ENCODE measurements at regions of chr3 and their contacts with region 1.

Region 1: GRCh38 chr3:172580680-172581401 is 57.6 kb upstream of the TNFSF10 start:
- DNase-seq: no peak
- ATAC-seq: no peak
- H3K4me3 Mint-ChIP-seq: no peak overlapping the region
- H3K27ac Mint-ChIP-seq: peak overlapping the region; percentile 14
- H3K4me1 Mint-ChIP-seq: peaks cover 26% of the 10 kb centered on the region
- H3K27me3 Mint-ChIP-seq: no peaks in the 10 kb centered on the region
- CTCF ChIP-seq: no peak

Region 2: DNA sequence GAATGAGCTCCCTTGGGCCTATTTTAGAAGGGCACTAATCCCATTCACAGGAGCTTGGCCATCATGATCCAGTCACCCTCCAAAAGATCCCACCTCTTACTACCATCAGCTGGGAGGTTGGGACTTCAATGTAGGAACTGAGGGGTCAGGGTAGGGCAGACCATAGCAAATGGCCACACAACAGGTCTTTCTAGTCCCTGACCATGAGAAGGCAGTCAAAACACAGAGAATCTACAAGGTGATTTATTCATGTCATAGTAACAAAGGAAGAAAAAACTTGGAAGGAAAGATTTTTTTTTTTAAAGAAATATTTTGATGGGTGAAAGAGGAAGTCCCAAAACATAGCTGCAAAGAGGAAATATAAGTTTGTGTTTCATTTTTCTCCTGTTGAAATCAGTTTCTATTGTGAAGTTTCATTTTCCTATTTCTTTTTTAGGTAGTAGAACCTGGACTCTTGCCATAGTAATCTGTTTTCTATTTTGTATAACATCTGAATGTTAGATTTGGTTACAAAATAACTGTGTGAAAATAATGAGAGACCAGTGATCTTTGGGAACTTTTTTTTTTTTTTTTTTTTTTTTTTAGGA is 34.1 kb before region 1 on chr3:
- CTCF ChIA-PET with region 1: no interaction called
- POLR2A ChIA-PET with region 1: no interaction called
- intact Hi-C with region 1: loop called (anchors 5 kb)
- DNase-seq: no peak
- ATAC-seq: peak; percentile 37
- H3K4me3 Mint-ChIP-seq: peak overlapping the region; percentile 32
- H3K27ac Mint-ChIP-seq: peak overlapping the region; percentile 35
- H3K4me1 Mint-ChIP-seq: peaks cover 31% of the 10 kb centered on the region
- H3K27me3 Mint-ChIP-seq: no peaks in the 10 kb centered on the region
- CTCF ChIP-seq: no peak

Region 3: DNA sequence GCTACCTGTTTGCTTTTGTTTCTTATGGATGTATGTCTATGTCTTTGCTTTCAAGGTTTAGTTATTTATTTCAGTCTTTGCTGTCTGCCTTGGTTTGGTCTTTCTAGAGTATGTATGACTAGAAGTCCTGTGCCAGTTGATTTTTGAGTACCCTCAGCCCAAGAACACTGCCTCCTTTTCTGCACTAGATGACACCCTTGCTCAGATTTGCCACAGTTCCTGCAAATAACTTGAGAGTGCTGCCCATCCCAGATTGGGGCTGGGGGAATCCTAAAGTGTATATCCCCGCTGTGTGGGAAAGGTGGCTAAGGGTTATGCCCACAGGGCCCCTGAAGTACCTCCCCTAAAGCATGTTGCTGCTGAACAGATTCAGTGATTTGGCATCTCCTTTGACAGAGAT is 848.7 kb after region 1 on chr3:
- CTCF ChIA-PET with region 1: no interaction called
- POLR2A ChIA-PET with region 1: no interaction called
- intact Hi-C with region 1: no loop called
- DNase-seq: no peak
- ATAC-seq: no peak
- H3K4me3 Mint-ChIP-seq: no peak overlapping the region
- H3K27ac Mint-ChIP-seq: no peak overlapping the region
- H3K4me1 Mint-ChIP-seq: no peaks in the 10 kb centered on the region
- H3K27me3 Mint-ChIP-seq: no peaks in the 10 kb centered on the region
- CTCF ChIP-seq: no peak